ENCODE measurements at regions of chr4 and their contacts with region 1.

Region 1: GRCh38 chr4:39937683-39938268 is 39.9 kb downstream of the PDS5A start:
- DNase-seq: no peak
- H3K4me3 ChIP-seq: no peak overlapping the region
- H3K27ac ChIP-seq: no peak overlapping the region
- H3K4me1 ChIP-seq: peaks cover 4 to 12% (median 7%) of the 10 kb centered on the region in 4 experiments; a peak in 6 of 7 replicates
- H3K27me3 ChIP-seq: no peaks in the 10 kb centered on the region
- CTCF ChIP-seq: no peak
- EP300 ChIP-seq: no peak
- POLR2A ChIP-seq: no peak
- RAD21 ChIP-seq: no peak

Region 2: DNA sequence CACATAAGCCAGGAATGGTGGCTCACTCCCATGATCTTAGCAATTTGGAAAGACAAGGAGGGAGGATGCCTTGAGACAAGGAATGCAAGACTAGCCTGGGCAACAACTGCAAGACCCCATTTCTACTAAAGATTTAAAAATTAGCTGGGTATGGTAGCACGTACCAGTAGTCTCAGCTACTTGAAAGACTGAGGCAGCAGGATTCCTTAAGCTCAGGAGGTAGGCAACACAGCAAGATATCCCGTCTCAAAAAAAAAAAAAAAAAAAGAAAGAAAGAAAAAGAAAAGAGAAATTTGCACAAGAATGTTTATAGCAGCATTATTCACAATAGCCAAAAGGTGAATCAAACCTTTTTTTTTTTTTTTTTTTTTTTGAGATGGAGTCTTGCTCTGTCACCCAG is 10.2 kb after region 1 on chr4:
- CTCF ChIA-PET with region 1: interaction called, 17 read pairs
- POLR2A ChIA-PET with region 1: interaction called, 6 read pairs
- DNase-seq: no peak
- H3K4me3 ChIP-seq: no peak overlapping the region
- H3K27ac ChIP-seq: no peak overlapping the region
- H3K4me1 ChIP-seq: peaks cover 0 to 7% (median 6%) of the 10 kb centered on the region in 4 experiments; a peak in 4 of 7 replicates
- H3K27me3 ChIP-seq: no peaks in the 10 kb centered on the region
- CTCF ChIP-seq: no peak
- EP300 ChIP-seq: no peak
- POLR2A ChIP-seq: no peak
- RAD21 ChIP-seq: no peak

Region 3: DNA sequence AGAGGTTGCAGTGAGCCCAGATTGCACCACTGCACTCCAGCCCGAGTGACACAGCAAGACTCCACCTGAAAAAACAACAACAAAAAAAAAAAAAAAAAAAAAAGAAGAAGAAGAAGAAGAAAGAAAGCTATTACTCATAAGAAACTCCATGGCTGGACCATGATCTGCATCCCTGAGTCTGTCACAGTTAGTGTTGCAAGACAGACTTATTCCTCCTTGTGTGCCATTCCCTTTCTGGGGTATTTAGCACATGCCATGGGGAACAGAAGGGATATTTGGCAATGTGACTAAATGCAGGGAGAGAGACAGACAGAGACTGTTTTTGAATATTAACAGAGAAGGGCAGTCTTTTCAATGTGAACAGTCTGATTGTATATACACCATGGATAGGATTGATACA is 56.6 kb after region 1 on chr4:
- CTCF ChIA-PET with region 1: no interaction called
- POLR2A ChIA-PET with region 1: no interaction called
- DNase-seq: no peak
- H3K4me3 ChIP-seq: no peak overlapping the region
- H3K27ac ChIP-seq: no peak overlapping the region
- H3K4me1 ChIP-seq: no peaks in the 10 kb centered on the region
- H3K27me3 ChIP-seq: no peaks in the 10 kb centered on the region
- CTCF ChIP-seq: no peak
- EP300 ChIP-seq: no peak
- POLR2A ChIP-seq: no peak
- RAD21 ChIP-seq: no peak

Region 4: DNA sequence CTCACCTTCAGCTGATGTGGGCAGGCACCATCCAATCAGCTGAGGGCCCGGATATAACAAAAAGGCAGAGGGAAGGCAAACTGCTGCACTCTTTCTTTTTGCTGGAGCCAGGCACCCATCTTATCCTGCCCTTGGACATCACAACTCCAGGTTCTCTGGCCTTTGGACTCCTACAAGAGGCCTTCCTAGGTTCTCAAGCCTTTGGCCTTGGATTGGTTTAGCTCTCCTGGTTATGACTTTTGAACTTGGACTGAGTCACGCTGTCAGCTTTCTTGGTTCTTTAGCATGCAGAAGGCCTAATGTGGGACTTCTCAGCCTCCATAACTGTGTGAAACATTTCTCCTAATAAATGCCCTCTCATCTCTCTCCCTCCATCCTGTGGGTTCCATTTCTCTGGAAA is 95.8 kb after region 1 on chr4:
- CTCF ChIA-PET with region 1: no interaction called
- POLR2A ChIA-PET with region 1: no interaction called
- DNase-seq: no peak
- H3K4me3 ChIP-seq: no peak overlapping the region
- H3K27ac ChIP-seq: no peak overlapping the region
- H3K4me1 ChIP-seq: no peaks in the 10 kb centered on the region; a peak in 2 of 7 replicates
- H3K27me3 ChIP-seq: no peaks in the 10 kb centered on the region
- CTCF ChIP-seq: no peak
- EP300 ChIP-seq: no peak
- POLR2A ChIP-seq: no peak
- RAD21 ChIP-seq: no peak

Measured in H1 (cell line).